ENCODE measurements at regions of chr3 and their contacts with region 1.

Region 1: GRCh38 chr3:36893137-36893557 is 51.7 kb downstream of the TRANK1 start:
- DNase-seq: peak; percentile 45
- CTCF ChIP-seq: no peak

Region 2: GRCh38 chr3:36904641-36905040 is 11.5 kb after region 1 on chr3:
- CTCF ChIA-PET with region 1: interaction called, 21 read pairs
- POLR2A ChIA-PET with region 1: interaction called, 3 read pairs
- DNase-seq: no peak
- CTCF ChIP-seq: peak; percentile 60

Measured in GM10248 (cell line).